Right lobe of liver (tissue), 6 donors: ENCODE measurements at regions of chr10 and their contacts with region 1.

Region 1: GRCh38 chr10:92087750-92088395 is 164.3 kb downstream of the BTAF1 start:
- DNase-seq: peak in 2 of 3 donors; percentile 44 to 75
- ATAC-seq: peak; percentile 79 to 99 (median 98)
- H3K4me3 ChIP-seq: no peak overlapping the region
- H3K27ac ChIP-seq: peak overlapping the region in 1 of 3 donors; percentile 33
- H3K4me1 ChIP-seq: peaks cover 0 to 34% (median 4%) of the 10 kb centered on the region in 4 donors
- H3K27me3 ChIP-seq: no peaks in the 10 kb centered on the region
- CTCF ChIP-seq: peak; percentile 55 to 97 (median 75)
- POLR2A ChIP-seq: no peak

Region 2: DNA sequence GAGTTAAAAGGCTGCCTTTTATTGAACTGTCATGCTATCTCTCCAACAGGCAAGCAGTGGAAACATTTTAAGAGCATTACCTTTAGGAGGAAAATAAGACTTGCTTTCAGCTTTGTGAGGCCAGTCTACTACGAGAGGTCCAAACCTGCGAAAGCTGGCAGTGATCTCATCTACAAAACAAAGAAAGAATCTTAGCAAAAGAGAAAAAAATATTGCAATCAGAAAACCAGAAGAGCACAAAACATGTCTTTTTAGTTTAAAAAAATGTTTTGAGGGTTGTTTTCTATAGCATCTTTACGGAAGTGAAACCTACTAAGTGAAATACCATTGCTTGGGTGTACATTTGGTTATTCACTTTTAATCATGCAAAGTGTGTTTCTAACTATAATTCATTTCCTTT is 55.1 kb after region 1 on chr10:
- intact Hi-C with region 1: no loop called
- DNase-seq: no peak
- ATAC-seq: no peak
- H3K4me3 ChIP-seq: no peak overlapping the region
- H3K27ac ChIP-seq: no peak overlapping the region
- H3K4me1 ChIP-seq: no peaks in the 10 kb centered on the region
- H3K27me3 ChIP-seq: no peaks in the 10 kb centered on the region
- CTCF ChIP-seq: no peak
- POLR2A ChIP-seq: no peak

Region 3: GRCh38 chr10:92440578-92440977 is 352.7 kb after region 1 on chr10:
- intact Hi-C with region 1: loop called in 1 of 2 experiments (anchors 10 kb)
- DNase-seq: no peak
- ATAC-seq: no peak
- H3K4me3 ChIP-seq: no peak overlapping the region
- H3K27ac ChIP-seq: no peak overlapping the region
- H3K4me1 ChIP-seq: no peaks in the 10 kb centered on the region
- H3K27me3 ChIP-seq: no peaks in the 10 kb centered on the region
- CTCF ChIP-seq: no peak
- POLR2A ChIP-seq: no peak